Activated CD4-positive, alpha-beta memory T cell treated with anti-CD3 and anti-CD28 coated beads, Interleukin-2, amount 10 ng/mL, durations not matched to agents 7 days and 5 days (primary cell): ENCODE measurements at regions of chr6 and their contacts with region 1.

Region 1: GRCh38 chr6:150068720-150069648 is at the start of gene ULBP3:
- DNase-seq: peak; percentile 78
- H3K4me3 Mint-ChIP-seq: peak within 1 kb of the TSS; percentile 69
- H3K27ac Mint-ChIP-seq: no peak within 1 kb of the TSS
- H3K4me1 Mint-ChIP-seq: peaks cover 43% of the 10 kb centered on the region
- H3K27me3 Mint-ChIP-seq: peaks cover 19% of the 10 kb centered on the region
- total RNA-seq, gene ULBP3: 2.2 to 3.5 TPM

Region 2: GRCh38 chr6:150053450-150053849 is 15.5 kb before region 1 on chr6:
- CTCF ChIA-PET with region 1: interaction called, 20 read pairs
- POLR2A ChIA-PET with region 1: interaction called, 4 read pairs
- DNase-seq: no peak
- H3K4me3 Mint-ChIP-seq: no peak overlapping the region
- H3K27ac Mint-ChIP-seq: no peak overlapping the region
- H3K4me1 Mint-ChIP-seq: no peaks in the 10 kb centered on the region
- H3K27me3 Mint-ChIP-seq: peaks cover 53% of the 10 kb centered on the region

Region 3: DNA sequence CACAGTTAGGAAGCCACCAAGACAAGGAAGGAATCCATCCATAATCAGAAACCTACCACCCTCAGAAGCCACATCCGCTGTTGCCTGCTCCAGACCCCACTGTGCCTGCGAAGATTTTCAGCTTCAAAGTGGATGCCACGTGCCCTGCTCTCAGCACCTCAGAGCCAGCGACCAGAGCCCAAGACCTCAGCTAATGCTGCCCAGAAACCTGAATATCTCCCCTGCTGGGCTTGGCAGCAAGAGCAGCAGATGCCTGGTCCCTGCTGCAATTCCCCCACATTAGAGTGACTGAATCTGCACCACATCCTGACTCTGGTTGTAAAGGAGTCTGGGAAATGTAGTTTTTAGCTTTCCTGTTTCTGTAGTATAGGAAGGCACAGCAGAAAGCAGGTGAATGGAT is 10.6 kb after region 1 on chr6:
- CTCF ChIA-PET with region 1: interaction called, 49 read pairs
- POLR2A ChIA-PET with region 1: no interaction called
- DNase-seq: peak; percentile 57
- H3K4me3 Mint-ChIP-seq: no peak overlapping the region
- H3K27ac Mint-ChIP-seq: peak overlapping the region; percentile 43
- H3K4me1 Mint-ChIP-seq: peaks cover 34% of the 10 kb centered on the region
- H3K27me3 Mint-ChIP-seq: peaks cover 35% of the 10 kb centered on the region